PC-9 (cell line): ENCODE measurements at regions of chr12 and their contacts with region 1.

Region 1: GRCh38 chr12:90978117-90978770 is 23.3 kb upstream of the CCER1 start:
- DNase-seq: no peak
- H3K4me3 ChIP-seq: no peak overlapping the region
- H3K27ac ChIP-seq: no peak overlapping the region
- H3K4me1 ChIP-seq: no peaks in the 10 kb centered on the region
- H3K27me3 ChIP-seq: no peaks in the 10 kb centered on the region
- CTCF ChIP-seq: peak; percentile 78

Region 2: GRCh38 chr12:90959538-90960139 is 18.6 kb before region 1 on chr12:
- CTCF ChIA-PET with region 1: no interaction called
- POLR2A ChIA-PET with region 1: no interaction called
- intact Hi-C with region 1: no loop called
- DNase-seq: peak in 1 of 2 experiments; percentile 6
- H3K4me3 ChIP-seq: no peak overlapping the region
- H3K27ac ChIP-seq: no peak overlapping the region
- H3K4me1 ChIP-seq: no peaks in the 10 kb centered on the region
- H3K27me3 ChIP-seq: no peaks in the 10 kb centered on the region
- CTCF ChIP-seq: peak; percentile 67

Region 3: DNA sequence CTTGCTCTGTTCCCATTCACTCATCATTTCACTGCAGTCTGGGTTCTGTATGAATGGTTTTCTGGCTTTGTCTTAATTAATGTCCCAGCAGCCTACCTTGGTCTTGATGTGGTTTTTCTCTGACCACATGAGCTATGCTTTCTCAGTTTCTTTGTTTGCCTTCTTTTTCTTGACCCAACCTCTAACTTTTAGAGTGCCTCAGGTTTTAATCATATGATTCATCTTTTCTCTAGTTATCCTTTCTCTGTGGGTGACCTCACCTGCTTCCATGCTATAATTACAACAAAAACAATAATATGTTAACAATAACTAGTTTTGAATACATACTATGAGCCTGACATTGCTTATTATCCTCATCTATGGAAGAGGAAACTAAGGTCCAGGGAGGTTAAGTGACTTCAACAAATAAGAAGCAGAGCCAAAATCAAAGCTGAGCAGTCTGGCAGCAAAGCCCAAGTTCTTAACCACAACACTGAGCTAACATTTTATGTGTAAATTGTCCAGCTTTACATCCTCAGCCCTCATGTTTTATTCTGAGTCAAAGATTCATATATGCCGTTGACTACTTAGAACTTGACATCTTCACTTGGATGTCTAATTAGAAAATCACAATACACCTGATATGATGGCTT is 31.2 kb after region 1 on chr12:
- CTCF ChIA-PET with region 1: no interaction called
- POLR2A ChIA-PET with region 1: no interaction called
- intact Hi-C with region 1: no loop called
- DNase-seq: no peak
- H3K4me3 ChIP-seq: no peak overlapping the region
- H3K27ac ChIP-seq: no peak overlapping the region
- H3K4me1 ChIP-seq: peaks cover 14% of the 10 kb centered on the region; the same call in 1 of the 2 replicates
- H3K27me3 ChIP-seq: no peaks in the 10 kb centered on the region
- CTCF ChIP-seq: no peak

Region 4: GRCh38 chr12:91109148-91109564 is 130.9 kb after region 1 on chr12:
- CTCF ChIA-PET with region 1: interaction called, 8 read pairs
- POLR2A ChIA-PET with region 1: no interaction called
- intact Hi-C with region 1: loop called (anchors 1 kb)
- DNase-seq: peak in 1 of 2 experiments; percentile 59
- H3K4me3 ChIP-seq: no peak overlapping the region
- H3K27ac ChIP-seq: no peak overlapping the region
- H3K4me1 ChIP-seq: no peaks in the 10 kb centered on the region
- H3K27me3 ChIP-seq: no peaks in the 10 kb centered on the region
- CTCF ChIP-seq: peak; percentile 85

Region 5: GRCh38 chr12:91202390-91202789 is 224.1 kb after region 1 on chr12:
- CTCF ChIA-PET with region 1: interaction called, 12 read pairs
- POLR2A ChIA-PET with region 1: no interaction called
- intact Hi-C with region 1: no loop called
- DNase-seq: no peak
- H3K4me3 ChIP-seq: no peak overlapping the region
- H3K27ac ChIP-seq: no peak overlapping the region
- H3K4me1 ChIP-seq: no peaks in the 10 kb centered on the region
- H3K27me3 ChIP-seq: no peaks in the 10 kb centered on the region
- CTCF ChIP-seq: no peak

Region 6: GRCh38 chr12:91274916-91275315 is 296.7 kb after region 1 on chr12:
- CTCF ChIA-PET with region 1: no interaction called
- POLR2A ChIA-PET with region 1: no interaction called
- intact Hi-C with region 1: no loop called
- DNase-seq: no peak
- H3K4me3 ChIP-seq: no peak overlapping the region
- H3K27ac ChIP-seq: no peak overlapping the region
- H3K4me1 ChIP-seq: no peaks in the 10 kb centered on the region
- H3K27me3 ChIP-seq: no peaks in the 10 kb centered on the region
- CTCF ChIP-seq: no peak

Region 7: GRCh38 chr12:91326058-91327027 is 348.1 kb after region 1 on chr12:
- CTCF ChIA-PET with region 1: interaction called, 15 read pairs
- POLR2A ChIA-PET with region 1: no interaction called
- intact Hi-C with region 1: loop called (anchors 1 kb)
- DNase-seq: peak in 1 of 2 experiments; percentile 20
- H3K4me3 ChIP-seq: no peak overlapping the region
- H3K27ac ChIP-seq: no peak overlapping the region
- H3K4me1 ChIP-seq: no peaks in the 10 kb centered on the region
- H3K27me3 ChIP-seq: no peaks in the 10 kb centered on the region
- CTCF ChIP-seq: peak; percentile 87

Region 8: DNA sequence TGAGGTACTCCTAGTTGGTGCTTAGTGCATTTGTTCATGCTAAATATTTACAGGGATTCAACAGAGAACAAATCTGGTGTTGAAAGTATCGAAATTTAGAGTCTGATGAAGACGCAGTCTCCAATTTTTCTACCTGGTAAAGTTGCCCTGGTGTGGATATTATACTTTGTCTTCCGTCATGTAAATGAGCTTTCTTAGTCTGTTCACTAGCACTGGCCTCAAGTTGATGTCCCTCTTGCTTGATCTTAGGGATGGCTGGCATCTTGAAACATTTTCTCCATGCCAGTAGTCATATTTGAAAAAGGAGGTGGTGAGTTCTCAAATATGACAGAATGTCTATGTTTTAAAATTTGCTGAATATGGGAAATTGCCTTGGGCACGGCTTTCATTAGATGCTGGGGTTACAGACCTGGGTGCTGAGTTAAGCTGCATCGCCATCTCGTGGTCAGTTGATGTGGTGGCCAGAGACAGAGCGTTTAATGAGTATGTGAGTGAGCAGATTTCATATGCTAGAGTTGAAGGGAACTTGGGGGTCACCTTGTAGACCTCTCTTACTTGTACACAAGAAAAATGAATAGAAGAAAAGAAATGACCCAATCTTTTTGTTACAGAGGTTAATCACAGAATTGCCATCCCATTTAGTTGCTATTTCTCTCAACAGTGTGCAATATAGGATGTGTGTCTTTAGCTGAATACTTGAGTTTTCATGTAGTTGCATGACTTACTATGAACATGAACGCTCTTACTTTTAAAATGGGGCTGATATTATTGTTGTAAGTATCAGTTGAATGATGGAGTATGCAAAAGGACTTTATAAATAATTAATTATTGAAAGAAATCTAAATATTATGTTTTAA is 377.1 kb after region 1 on chr12:
- CTCF ChIA-PET with region 1: interaction called, 4 read pairs
- POLR2A ChIA-PET with region 1: no interaction called
- intact Hi-C with region 1: loop called (anchors 1 kb)
- DNase-seq: peak; percentile 44 to 55
- H3K4me3 ChIP-seq: no peak overlapping the region
- H3K27ac ChIP-seq: no peak overlapping the region
- H3K4me1 ChIP-seq: no peaks in the 10 kb centered on the region; the same call in 1 of the 2 replicates
- H3K27me3 ChIP-seq: no peaks in the 10 kb centered on the region
- CTCF ChIP-seq: peak; percentile 86

Region 9: DNA sequence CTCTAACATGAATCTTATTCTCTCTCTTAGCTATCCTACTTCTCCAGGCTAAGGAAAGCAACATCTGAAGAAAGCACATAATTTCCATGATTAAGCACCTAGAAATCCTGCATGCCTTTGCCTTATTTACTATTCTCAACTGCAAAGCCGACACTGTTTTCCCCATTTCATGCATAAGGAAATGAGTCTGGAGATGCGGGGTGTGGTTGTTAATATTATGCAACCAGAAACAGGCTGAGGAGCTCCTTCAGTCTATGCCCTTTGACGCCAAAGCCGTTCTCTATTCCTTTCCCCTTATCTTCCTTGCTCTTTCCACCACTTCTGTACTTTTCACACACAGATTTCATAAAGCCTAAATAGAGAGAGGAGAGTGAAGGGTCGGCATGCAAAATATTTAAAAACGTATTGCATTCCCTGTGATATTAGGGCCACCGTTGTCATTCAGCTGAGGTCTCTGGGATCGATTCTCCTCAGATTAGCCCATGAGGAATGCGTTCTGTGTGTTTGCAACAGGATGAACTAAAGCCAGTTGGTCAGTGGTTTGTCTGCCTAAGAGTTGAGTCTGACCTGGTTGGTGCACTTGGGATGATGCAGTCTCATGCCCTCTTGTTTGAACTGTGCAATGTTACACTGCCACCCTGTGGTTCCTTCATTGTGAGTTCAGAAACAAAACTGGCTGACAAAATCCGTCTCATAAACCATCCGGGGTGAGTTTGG is 1671.4 kb after region 1 on chr12:
- CTCF ChIA-PET with region 1: no interaction called
- POLR2A ChIA-PET with region 1: no interaction called
- intact Hi-C with region 1: loop called (anchors 10 kb)
- DNase-seq: peak; percentile 53 to 54
- H3K4me3 ChIP-seq: no peak overlapping the region
- H3K27ac ChIP-seq: no peak overlapping the region
- H3K4me1 ChIP-seq: peaks cover 15% of the 10 kb centered on the region
- H3K27me3 ChIP-seq: no peaks in the 10 kb centered on the region
- CTCF ChIP-seq: peak; percentile 78